K562 (cell line): ENCODE measurements at regions of chr5 and their contacts with region 1.

Region 1: DNA sequence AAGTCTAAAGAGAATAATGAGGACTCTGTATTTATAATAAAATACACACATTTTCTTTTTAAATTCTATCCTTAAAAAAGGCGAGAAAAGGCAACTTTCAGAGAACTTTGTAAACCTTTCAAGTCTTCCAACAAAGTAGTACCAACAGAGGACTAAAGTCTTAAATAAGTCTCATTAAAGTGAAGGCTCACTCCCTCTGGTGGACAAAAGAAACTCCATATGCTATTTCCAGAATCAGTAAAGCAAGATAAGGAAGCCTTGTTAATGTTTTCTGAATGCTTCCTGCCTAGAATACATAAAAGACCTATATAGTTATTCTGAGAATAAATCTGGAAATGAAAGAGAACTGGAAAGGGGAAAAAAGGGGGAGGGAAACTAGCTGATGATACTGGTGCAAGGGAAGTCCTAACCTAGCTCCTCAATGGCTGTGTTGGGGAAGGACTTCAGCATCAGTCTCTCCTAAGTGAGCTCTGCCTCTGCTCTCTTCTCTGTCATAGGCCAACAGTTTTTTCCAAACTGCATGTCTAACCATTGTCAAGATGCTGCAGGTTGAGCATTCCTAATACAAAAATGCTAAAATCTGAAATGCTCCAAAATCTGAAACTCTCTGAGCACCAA is 7.2 kb downstream of the HMGCS1 start:
- DNase-seq: peak; percentile 41 to 85 (median 44)
- ATAC-seq: peak; percentile 78
- H3K4me3 ChIP-seq: no peak overlapping the region
- H3K27ac ChIP-seq: no peak overlapping the region
- H3K4me1 ChIP-seq: peaks cover 11 to 57% of the 10 kb centered on the region in 2 experiments
- H3K27me3 ChIP-seq: no peaks in the 10 kb centered on the region
- CTCF ChIP-seq: peak; percentile 62 to 83 (median 72); a peak in 5 of 6 replicates
- EP300 ChIP-seq: no peak
- POLR2A ChIP-seq: no peak
- RAD21 ChIP-seq: peak; percentile 83 to 85

Region 2: GRCh38 chr5:43227655-43228054 is 78.4 kb before region 1 on chr5:
- CTCF ChIA-PET with region 1: interaction called, 7 read pairs
- POLR2A ChIA-PET with region 1: no interaction called
- in situ Hi-C with region 1: no loop called
- intact Hi-C with region 1: loop called (anchors 1 kb)
- DNase-seq: peak; percentile 41 to 72 (median 49)
- ATAC-seq: peak; percentile 53; the same call in 2 of the 3 replicates
- H3K4me3 ChIP-seq: no peak overlapping the region
- H3K27ac ChIP-seq: no peak overlapping the region
- H3K4me1 ChIP-seq: peaks cover 0 to 16% of the 10 kb centered on the region in 2 experiments; a peak in 3 of 5 replicates
- H3K27me3 ChIP-seq: no peaks in the 10 kb centered on the region
- CTCF ChIP-seq: peak; percentile 54 to 86 (median 57); a peak in 4 of 6 replicates
- EP300 ChIP-seq: no peak
- POLR2A ChIP-seq: no peak
- RAD21 ChIP-seq: peak; percentile 82 to 87

Region 3: GRCh38 chr5:43268188-43268820 is 37.8 kb before region 1 on chr5:
- CTCF ChIA-PET with region 1: no interaction called
- POLR2A ChIA-PET with region 1: no interaction called
- in situ Hi-C with region 1: no loop called
- intact Hi-C with region 1: no loop called
- DNase-seq: peak in 1 of 4 experiments; percentile 68
- ATAC-seq: peak; percentile 76
- H3K4me3 ChIP-seq: no peak overlapping the region
- H3K27ac ChIP-seq: no peak overlapping the region
- H3K4me1 ChIP-seq: peaks cover 5 to 11% of the 10 kb centered on the region in 2 experiments; a peak in 2 of 5 replicates
- H3K27me3 ChIP-seq: no peaks in the 10 kb centered on the region
- CTCF ChIP-seq: no peak
- EP300 ChIP-seq: peak; percentile 44; the same call in 1 of the 2 replicates
- POLR2A ChIP-seq: no peak
- RAD21 ChIP-seq: no peak